CD4-positive, alpha-beta T cell (primary cell): ENCODE measurements at regions of chr14 and their contacts with region 1.

Region 1: DNA sequence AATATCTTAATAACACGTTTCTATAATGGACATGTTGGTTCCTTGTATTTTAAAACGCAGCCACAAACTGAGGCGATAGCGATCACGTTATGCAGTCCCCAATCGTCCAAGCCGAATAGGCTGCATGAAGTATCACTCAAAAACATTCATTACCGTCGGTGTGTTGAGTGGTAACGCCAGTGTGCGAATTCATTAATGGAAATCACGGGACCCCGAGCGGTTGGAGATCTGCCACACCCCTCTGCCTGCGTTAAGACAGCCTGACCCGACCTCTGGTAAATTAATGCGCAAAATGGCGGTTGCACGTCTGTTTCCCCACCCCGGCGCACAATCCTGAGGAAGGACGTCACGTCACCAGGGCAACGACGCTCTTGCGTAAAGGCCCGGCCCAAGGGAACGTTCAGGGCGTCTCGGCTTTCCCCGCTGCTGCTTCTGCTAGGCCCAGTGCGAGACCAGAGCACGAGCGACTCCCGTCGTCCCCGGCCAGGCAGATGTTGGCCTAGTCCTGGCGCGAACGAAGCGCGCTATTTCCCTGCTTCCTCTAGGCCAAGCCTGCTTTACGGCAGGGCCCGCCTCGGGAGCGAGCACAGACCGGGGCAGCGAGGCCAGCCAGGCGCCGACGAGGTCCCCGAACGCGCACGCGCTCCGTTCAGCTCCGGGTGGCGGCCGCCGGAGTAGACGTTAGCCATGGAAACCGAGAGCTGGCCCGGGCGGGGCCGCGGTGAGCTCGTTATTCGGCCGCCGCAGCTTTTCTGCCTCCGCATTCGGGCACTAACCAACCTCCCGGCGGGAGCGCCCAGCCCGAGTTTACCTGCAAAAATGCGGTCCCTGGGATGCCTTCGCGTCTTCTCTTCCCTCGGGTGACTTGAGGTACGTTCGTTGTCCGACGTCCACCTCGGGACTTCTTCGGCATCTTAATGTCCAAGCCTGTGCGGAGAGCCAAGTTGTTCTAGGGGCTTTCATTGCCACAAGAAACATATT is at the start of gene PCNX4:
- DNase-seq: peak; percentile 88 to 99 (median 92)
- ATAC-seq: peak; percentile 92
- H3K4me3 ChIP-seq: peak within 1 kb of the TSS; percentile 89
- H3K4me3 Mint-ChIP-seq: peak within 1 kb of the TSS; percentile 96
- H3K27ac ChIP-seq: peak within 1 kb of the TSS; percentile 94 to 98
- H3K27ac Mint-ChIP-seq: peak within 1 kb of the TSS; percentile 99
- H3K4me1 ChIP-seq: peaks cover 21% of the 10 kb centered on the region
- H3K4me1 Mint-ChIP-seq: peaks cover 51% of the 10 kb centered on the region
- H3K27me3 ChIP-seq: no peaks in the 10 kb centered on the region
- H3K27me3 Mint-ChIP-seq: no peaks in the 10 kb centered on the region
- CTCF ChIP-seq: no peak
- total RNA-seq, gene PCNX4: 17.3 to 21.0 TPM

Region 2: DNA sequence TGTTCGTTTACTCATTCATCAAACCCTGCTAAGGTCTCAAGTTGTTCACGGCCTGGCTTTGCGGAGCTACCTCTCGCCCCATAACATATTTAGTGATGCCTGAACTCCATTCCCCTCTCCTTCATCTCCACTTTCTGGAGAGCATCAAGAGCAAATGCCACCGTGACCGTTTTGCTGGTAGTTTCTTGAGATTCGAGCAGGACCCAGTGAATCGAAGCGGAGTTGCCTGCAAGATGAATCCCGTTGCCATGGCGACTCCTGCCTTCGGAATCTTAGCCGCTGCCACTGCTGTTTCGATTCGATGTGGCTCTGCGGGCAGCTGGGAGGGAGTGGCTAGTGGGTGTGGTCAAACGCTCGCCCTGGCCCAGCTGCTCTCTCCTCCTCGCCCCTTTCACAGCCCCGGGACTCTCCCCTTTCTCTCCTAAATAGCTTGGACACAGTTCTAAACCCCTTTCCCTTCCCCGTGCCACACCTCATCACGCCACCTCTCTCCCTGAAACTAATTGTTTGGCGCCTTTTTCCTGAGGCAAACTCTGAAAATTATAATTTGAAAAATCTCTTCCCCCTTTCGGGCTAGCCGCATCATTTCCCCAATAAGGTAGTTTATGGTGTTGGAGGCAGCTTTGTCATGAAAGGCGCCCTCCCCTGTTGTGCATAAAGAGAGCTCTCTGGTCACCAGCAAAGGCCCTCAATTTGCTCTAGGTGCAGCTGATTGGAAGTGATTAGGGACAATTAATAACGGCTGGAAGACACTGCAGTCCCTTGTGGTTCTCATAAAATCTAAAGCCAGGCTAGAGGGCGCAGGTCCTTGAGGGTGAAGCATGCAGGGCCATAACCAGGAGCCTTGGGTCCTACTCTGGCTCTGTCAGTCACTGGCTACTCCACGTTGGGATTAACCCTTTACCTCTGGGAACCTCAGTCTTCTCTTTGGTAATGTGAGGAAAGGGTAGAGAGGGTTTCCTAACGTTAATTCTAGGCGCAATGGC is 901.8 kb before region 1 on chr14:
- CTCF ChIA-PET with region 1: no interaction called
- POLR2A ChIA-PET with region 1: no interaction called
- intact Hi-C with region 1: loop called (anchors 5 kb)
- DNase-seq: peak; percentile 28 to 91 (median 56)
- ATAC-seq: no peak
- H3K4me3 ChIP-seq: peak overlapping the region; percentile 83
- H3K4me3 Mint-ChIP-seq: peak overlapping the region; percentile 99
- H3K27ac ChIP-seq: peak overlapping the region; percentile 84 to 87
- H3K27ac Mint-ChIP-seq: peak overlapping the region; percentile 94
- H3K4me1 ChIP-seq: peaks cover 20% of the 10 kb centered on the region
- H3K4me1 Mint-ChIP-seq: peaks cover 29% of the 10 kb centered on the region
- H3K27me3 ChIP-seq: no peaks in the 10 kb centered on the region
- H3K27me3 Mint-ChIP-seq: no peaks in the 10 kb centered on the region
- CTCF ChIP-seq: no peak

Region 3: DNA sequence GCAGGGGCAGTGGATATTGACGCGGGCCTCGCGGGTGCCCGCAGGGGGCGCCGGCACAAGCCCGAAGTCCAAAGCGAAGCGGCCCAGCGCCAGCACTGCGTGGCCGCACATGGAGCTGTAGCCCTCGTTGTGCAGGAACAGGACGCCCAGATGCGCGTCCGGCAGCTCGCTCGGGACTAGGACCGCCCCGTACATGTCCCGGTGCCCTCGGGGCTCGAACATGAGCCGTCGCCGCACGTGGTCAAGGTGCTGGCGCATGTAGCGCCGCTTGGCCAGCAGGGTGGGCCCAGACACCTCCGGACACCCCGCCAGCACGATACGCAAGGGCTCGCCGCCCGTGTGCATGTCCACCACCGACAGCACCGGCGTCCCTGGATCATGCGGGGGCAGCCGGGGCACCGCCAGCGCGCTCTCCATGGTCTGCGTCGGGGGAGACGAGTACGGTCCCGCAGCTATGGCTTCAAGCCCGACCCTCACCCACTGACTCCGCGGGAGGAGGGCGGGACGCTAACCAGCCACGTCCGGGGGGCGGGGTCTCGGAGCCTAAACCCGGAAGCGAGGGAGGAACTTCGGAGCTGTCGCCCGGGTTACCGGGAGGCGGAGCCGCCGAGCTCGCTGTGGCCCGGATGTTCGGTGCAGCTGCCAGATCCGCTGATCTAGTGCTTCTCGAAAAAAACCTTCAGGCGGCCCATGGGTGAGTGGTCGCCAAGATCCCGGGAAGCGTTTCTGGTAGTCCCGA is 607.8 kb before region 1 on chr14 and contains the starts of genes JKAMP and L3HYPDH:
- CTCF ChIA-PET with region 1: no interaction called
- POLR2A ChIA-PET with region 1: no interaction called
- intact Hi-C with region 1: loop called (anchors 10 kb)
- DNase-seq: peak; percentile 95 to 99 (median 97)
- ATAC-seq: peak; percentile 95
- H3K4me3 ChIP-seq: peak within 1 kb of the TSS; percentile 99
- H3K4me3 Mint-ChIP-seq: peak within 1 kb of the TSS; percentile 99
- H3K27ac ChIP-seq: peak within 1 kb of the TSS; percentile 62 to 63
- H3K27ac Mint-ChIP-seq: peak within 1 kb of the TSS; percentile 96
- H3K4me1 ChIP-seq: peaks cover 39% of the 10 kb centered on the region
- H3K4me1 Mint-ChIP-seq: peaks cover 73% of the 10 kb centered on the region
- H3K27me3 ChIP-seq: no peaks in the 10 kb centered on the region
- H3K27me3 Mint-ChIP-seq: no peaks in the 10 kb centered on the region
- CTCF ChIP-seq: peak; percentile 28
- total RNA-seq, gene JKAMP: 9.4 to 9.8 TPM
- total RNA-seq, gene L3HYPDH: 10.6 to 11.1 TPM

Region 4: GRCh38 chr14:59964251-59965007 is 127.4 kb before region 1 on chr14:
- CTCF ChIA-PET with region 1: interaction called, 7 read pairs
- POLR2A ChIA-PET with region 1: interaction called, 4 read pairs
- intact Hi-C with region 1: loop called in 1 of 2 experiments (anchors 5 kb)
- DNase-seq: peak in 2 of 14 experiments; percentile 13 to 18
- ATAC-seq: peak; percentile 10
- H3K4me3 ChIP-seq: peak overlapping the region; percentile 64
- H3K4me3 Mint-ChIP-seq: peak overlapping the region; percentile 94
- H3K27ac ChIP-seq: no peak overlapping the region
- H3K27ac Mint-ChIP-seq: peak overlapping the region; percentile 96
- H3K4me1 ChIP-seq: peaks cover 9% of the 10 kb centered on the region
- H3K4me1 Mint-ChIP-seq: peaks cover 22% of the 10 kb centered on the region
- H3K27me3 ChIP-seq: no peaks in the 10 kb centered on the region
- H3K27me3 Mint-ChIP-seq: no peaks in the 10 kb centered on the region
- CTCF ChIP-seq: no peak

Region 5: GRCh38 chr14:60114881-60115280 is 23.0 kb after region 1 on chr14:
- CTCF ChIA-PET with region 1: no interaction called
- POLR2A ChIA-PET with region 1: interaction called, 3 read pairs
- intact Hi-C with region 1: loop called in 1 of 2 experiments (anchors 2 kb)
- DNase-seq: no peak
- ATAC-seq: no peak
- H3K4me3 ChIP-seq: no peak overlapping the region
- H3K4me3 Mint-ChIP-seq: no peak overlapping the region
- H3K27ac ChIP-seq: no peak overlapping the region
- H3K27ac Mint-ChIP-seq: no peak overlapping the region
- H3K4me1 ChIP-seq: no peaks in the 10 kb centered on the region
- H3K4me1 Mint-ChIP-seq: peaks cover 3% of the 10 kb centered on the region
- H3K27me3 ChIP-seq: no peaks in the 10 kb centered on the region
- H3K27me3 Mint-ChIP-seq: no peaks in the 10 kb centered on the region
- CTCF ChIP-seq: no peak

Region 6: DNA sequence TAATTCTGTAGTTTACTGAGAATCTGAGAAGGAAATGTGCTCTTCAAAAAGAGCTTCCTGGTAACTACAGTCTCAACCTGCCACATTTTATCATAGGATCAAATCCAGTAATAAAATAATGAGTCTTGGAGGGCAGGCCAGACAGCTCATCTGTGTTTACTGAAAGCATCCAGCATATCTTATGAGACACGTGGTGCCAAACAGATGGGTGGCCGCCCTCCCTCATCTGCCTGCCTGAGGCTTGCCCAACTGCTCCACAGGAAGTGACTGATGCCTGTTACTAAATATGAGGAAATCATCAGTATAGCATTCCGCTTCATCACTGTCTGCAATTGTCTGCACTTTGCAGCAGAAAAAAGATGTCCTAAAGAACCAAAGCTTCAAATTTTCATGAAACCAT is 59.9 kb after region 1 on chr14:
- CTCF ChIA-PET with region 1: no interaction called
- POLR2A ChIA-PET with region 1: interaction called, 18 read pairs
- intact Hi-C with region 1: loop called in 1 of 2 experiments (anchors 5 kb)
- DNase-seq: peak; percentile 44 to 87 (median 68)
- ATAC-seq: peak; percentile 99
- H3K4me3 ChIP-seq: no peak overlapping the region
- H3K4me3 Mint-ChIP-seq: no peak overlapping the region
- H3K27ac ChIP-seq: peak overlapping the region; percentile 32 to 73
- H3K27ac Mint-ChIP-seq: peak overlapping the region; percentile 87
- H3K4me1 ChIP-seq: peaks cover 29% of the 10 kb centered on the region
- H3K4me1 Mint-ChIP-seq: peaks cover 52% of the 10 kb centered on the region
- H3K27me3 ChIP-seq: no peaks in the 10 kb centered on the region
- H3K27me3 Mint-ChIP-seq: no peaks in the 10 kb centered on the region
- CTCF ChIP-seq: no peak

Region 7: DNA sequence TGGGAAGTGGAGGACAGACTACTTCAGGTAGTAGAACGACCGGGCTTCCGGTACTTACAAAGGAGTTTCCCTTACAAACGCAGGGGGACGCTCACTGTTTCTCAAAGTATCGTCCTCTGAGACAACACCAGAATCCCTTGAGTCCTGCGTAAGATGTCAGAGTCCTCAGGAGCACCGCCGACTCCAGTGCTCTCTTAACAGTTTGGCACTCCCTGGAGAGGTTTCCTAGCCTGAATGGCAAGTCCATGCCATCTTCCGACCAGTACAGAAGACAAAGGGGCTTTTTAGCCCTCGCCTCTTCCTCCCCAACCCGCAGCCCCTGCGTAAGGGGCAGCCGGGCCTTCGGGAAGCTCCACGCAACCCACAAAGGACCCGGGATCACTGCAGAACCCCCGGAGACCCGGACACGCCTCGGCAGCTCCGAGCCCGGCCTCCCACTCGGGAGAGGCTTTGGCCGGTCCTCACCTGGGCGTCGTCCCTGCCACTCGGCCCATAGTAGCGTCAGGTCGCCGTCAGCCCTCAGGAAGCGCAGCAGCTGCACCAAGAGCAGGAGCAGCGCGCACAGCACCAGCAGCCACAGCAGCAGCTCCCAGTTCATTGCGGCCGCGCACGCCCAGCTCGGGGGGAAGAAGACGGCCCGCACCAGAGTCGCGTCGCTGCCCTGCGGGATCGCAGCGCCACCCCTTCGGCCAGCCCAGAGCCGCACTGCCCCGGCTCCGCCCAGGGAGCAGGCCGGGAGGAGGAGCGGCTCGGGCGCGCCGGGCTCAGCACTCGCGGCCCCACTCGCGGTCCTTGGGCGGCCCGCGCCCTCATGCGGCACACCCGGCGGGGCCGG is 73.1 kb after region 1 on chr14 and contains the start of gene DHRS7:
- CTCF ChIA-PET with region 1: interaction called, 4 read pairs
- POLR2A ChIA-PET with region 1: interaction called, 47 read pairs
- intact Hi-C with region 1: loop called (anchors 2 to 5 kb)
- DNase-seq: peak; percentile 33 to 87 (median 54)
- ATAC-seq: peak; percentile 73
- H3K4me3 ChIP-seq: peak within 1 kb of the TSS; percentile 70
- H3K4me3 Mint-ChIP-seq: peak within 1 kb of the TSS; percentile 96
- H3K27ac ChIP-seq: peak within 1 kb of the TSS; percentile 88 to 90
- H3K27ac Mint-ChIP-seq: peak within 1 kb of the TSS; percentile 97
- H3K4me1 ChIP-seq: peaks cover 32% of the 10 kb centered on the region
- H3K4me1 Mint-ChIP-seq: peaks cover 53% of the 10 kb centered on the region
- H3K27me3 ChIP-seq: no peaks in the 10 kb centered on the region
- H3K27me3 Mint-ChIP-seq: no peaks in the 10 kb centered on the region
- CTCF ChIP-seq: no peak
- total RNA-seq, gene DHRS7: 24.5 to 28.6 TPM

Region 8: GRCh38 chr14:61188978-61189808 is 1097.4 kb after region 1 on chr14:
- CTCF ChIA-PET with region 1: no interaction called
- POLR2A ChIA-PET with region 1: no interaction called
- intact Hi-C with region 1: no loop called
- DNase-seq: peak in 4 of 14 experiments; percentile 6 to 43 (median 24)
- ATAC-seq: peak; percentile 43
- H3K4me3 ChIP-seq: peak overlapping the region; percentile 16
- H3K4me3 Mint-ChIP-seq: peak overlapping the region; percentile 21
- H3K27ac ChIP-seq: no peak overlapping the region
- H3K27ac Mint-ChIP-seq: no peak overlapping the region
- H3K4me1 ChIP-seq: peaks cover 13% of the 10 kb centered on the region
- H3K4me1 Mint-ChIP-seq: peaks cover 9% of the 10 kb centered on the region
- H3K27me3 ChIP-seq: peaks cover 27 to 29% of the 10 kb centered on the region in 2 experiments
- H3K27me3 Mint-ChIP-seq: peaks cover 71% of the 10 kb centered on the region
- CTCF ChIP-seq: no peak